ENCODE measurements at regions of chr10 and their contacts with region 1.

Region 1: GRCh38 chr10:116690356-116691322 is 51.7 kb downstream of the HSPA12A start:
- DNase-seq: peak; percentile 63 to 68
- H3K4me3 ChIP-seq: no peak overlapping the region
- H3K27ac ChIP-seq: peak overlapping the region; percentile 43 to 92 (median 81)
- H3K4me1 ChIP-seq: peaks cover 42 to 75% of the 10 kb centered on the region in 2 donors
- H3K27me3 ChIP-seq: no peaks in the 10 kb centered on the region
- CTCF ChIP-seq: peak in 5 of 6 experiments; percentile 20 to 58 (median 40)
- POLR2A ChIP-seq: no peak

Region 2: DNA sequence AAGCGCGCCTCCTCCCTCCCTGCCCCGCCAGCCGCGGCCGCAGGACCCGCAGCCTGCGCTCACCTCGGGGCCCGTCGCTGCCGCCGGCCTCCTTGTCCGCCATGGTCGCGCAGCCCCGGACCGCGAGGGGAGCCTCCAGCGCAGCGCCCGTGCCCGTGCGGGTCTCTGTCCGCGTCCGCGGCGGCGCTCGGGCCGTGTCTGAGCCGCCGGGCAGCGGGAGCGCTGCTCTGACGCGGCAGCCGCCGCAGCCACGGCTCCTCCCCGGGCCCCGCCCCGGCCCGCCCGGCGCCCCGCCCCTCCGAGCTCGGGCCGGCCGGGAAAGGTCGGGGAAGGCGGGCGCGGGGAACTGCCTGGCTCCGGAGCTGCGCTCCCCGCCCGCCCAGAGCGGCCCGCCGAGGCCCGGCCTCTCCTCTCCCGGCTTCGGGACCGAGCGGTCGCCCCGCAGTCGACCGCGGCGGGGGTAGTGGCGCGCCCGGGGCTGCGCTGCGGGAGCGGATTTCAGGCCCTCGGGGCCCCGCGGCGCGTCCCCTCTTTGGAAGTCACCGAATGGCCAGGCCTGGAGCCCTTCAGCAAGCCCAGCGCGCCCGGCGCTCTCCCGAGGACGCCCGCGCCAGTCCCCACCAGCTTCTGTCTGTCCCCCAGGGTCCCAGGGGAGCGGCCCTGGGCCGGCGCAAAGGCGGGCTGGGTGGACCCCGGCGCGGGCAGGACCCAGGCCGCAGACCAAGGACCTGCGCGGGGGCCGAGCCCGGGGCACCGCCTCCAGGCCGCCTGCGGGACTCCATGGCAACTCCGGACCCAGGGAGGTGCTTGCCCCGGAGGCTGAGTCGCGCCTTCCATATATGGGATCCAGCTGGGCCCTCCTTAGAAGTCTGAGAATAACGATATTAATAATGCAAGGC is 52.0 kb after region 1 on chr10 and contains the start of gene HSPA12A:
- intact Hi-C with region 1: loop called (anchors 10 kb)
- DNase-seq: peak; percentile 78 to 80
- H3K4me3 ChIP-seq: peak within 1 kb of the TSS; percentile 54 to 96 (median 77)
- H3K27ac ChIP-seq: peak within 1 kb of the TSS; percentile 81 to 88 (median 87)
- H3K4me1 ChIP-seq: peaks cover 3 to 28% of the 10 kb centered on the region in 2 donors
- H3K27me3 ChIP-seq: no peaks in the 10 kb centered on the region
- CTCF ChIP-seq: no peak
- POLR2A ChIP-seq: peak; percentile 78 to 96
- total RNA-seq, gene HSPA12A: 22.6 to 37.3 (median 34.6) TPM

Measured in thyroid gland (tissue), 4 donors.